Dorsolateral prefrontal cortex (tissue), 120 donors: ENCODE measurements at regions of chr16 and their contacts with region 1.

Region 1: GRCh38 chr16:74726716-74727115 is 26.1 kb upstream of the MLKL start:
- DNase-seq: no peak
- H3K4me3 ChIP-seq: no peak overlapping the region
- H3K27ac ChIP-seq: peak overlapping the region in 56 of 59 donors; percentile 40 to 100 (median 98)
- H3K27me3 ChIP-seq: no peaks in the 10 kb centered on the region
- CTCF ChIP-seq: peak in 14 of 56 donors; percentile 9 to 32 (median 18)

Region 2: GRCh38 chr16:74749291-74750055 is 22.8 kb after region 1 on chr16:
- intact Hi-C with region 1: loop called (anchors 1 to 2 kb)
- DNase-seq: no peak
- H3K4me3 ChIP-seq: peak overlapping the region in 10 of 59 donors; percentile 3 to 34 (median 12)
- H3K27ac ChIP-seq: peak overlapping the region; percentile 79 to 100 (median 97)
- H3K27me3 ChIP-seq: peaks cover 0 to 10% (median 0%) of the 10 kb centered on the region in 45 donors
- CTCF ChIP-seq: no peak